CD8-positive, alpha-beta memory T cell (primary cell): ENCODE measurements at regions of chr17 and their contacts with region 1.

Region 1: DNA sequence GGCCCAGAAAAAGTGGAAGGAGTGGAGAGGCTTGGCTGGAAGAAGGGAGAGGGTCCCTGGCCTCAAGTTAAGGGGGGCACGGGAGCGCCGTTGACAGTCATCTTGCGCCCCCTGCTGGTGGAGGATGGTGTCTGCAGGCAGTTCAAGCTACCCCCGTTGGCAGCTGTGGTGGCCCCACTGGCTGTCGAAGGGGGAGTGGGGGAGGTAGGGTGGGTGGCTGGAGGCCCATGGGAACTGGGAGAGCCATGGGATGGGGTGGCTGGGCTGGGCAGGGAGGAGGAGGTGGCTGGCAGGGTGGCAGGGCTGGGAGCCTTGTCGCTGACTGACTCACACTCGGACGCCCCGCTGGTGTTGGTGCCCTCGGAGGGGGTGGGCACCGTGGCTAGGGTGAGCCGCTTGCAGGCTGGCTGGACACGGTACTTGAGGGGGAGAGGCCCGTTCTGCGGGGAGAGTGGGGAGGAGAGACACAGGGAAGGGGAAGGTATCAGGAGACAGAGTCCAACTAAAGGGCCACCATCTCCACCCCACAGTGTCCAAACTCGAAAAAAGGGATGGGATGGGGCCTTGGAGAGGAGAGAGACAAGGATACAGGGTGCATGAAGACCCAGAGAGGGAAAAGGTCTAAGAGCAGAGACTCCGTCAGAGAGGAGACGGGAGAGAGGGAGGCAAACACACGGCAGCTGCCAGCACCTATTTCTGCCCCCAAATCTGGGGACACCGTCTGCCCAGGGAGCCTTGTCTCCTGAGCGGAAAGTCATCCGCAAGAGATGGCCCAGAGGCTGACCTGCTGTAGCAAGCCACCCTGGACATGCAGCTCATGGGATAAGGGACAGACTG is 5.2 kb downstream of the CISD3 start:
- DNase-seq: peak; percentile 59 to 83 (median 72)
- H3K4me3 ChIP-seq: no peak overlapping the region
- H3K4me3 Mint-ChIP-seq: peak overlapping the region in 1 of 7 donors; percentile 22
- H3K27ac ChIP-seq: no peak overlapping the region
- H3K27ac Mint-ChIP-seq: peak overlapping the region in 2 of 8 donors; percentile 26 to 99
- H3K4me1 ChIP-seq: peaks cover 23% of the 10 kb centered on the region
- H3K4me1 Mint-ChIP-seq: peaks cover 38 to 51% (median 42%) of the 10 kb centered on the region in 3 donors
- H3K27me3 ChIP-seq: no peaks in the 10 kb centered on the region
- H3K27me3 Mint-ChIP-seq: no peaks in the 10 kb centered on the region

Region 2: DNA sequence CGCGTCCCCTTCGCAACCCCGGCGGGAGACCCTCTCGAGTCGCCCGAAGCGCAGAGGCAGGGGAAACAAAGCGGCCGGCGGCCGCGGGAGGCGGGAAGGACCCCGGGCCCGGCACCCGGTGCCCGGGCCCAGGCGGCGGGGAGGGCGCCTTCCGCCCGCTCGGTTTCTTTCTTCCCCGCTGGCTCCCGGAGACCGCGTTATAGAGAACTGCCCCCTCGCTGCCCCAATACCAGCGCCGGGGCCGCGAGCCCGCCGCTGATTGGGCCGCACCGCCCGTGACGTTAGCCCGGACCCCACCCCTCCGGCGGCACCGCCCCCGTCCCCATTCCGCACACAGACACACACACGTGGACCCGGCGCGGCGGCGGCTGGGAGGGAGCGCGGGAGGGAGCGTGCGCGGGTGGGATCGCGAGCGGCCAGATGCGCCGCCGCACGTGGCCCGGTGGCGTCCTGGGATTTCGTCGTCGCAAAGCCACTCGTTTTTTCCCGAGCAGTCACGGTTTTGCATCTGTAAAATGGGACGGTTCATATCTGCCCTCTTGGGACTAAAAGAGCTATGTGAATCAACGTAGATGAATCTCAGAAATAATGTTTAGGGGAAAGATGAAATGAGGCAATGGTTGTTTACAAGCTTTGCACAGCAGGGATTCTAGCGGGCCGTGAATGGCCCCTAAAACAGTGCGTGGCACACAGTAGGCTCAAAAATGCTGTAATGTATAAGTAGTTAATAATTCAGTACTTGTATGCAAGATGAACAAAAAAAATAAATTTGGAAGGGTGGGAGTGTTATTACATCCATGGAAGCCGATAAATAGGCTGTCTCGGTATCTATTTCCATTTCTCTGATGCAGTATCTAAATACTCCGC is 60.4 kb before region 1 on chr17 and contains the start of gene EPOP:
- CTCF ChIA-PET with region 1: interaction called, 140 read pairs
- POLR2A ChIA-PET with region 1: interaction called, 5 read pairs
- DNase-seq: peak; percentile 75 to 82 (median 81)
- H3K4me3 ChIP-seq: peak within 1 kb of the TSS; percentile 5
- H3K4me3 Mint-ChIP-seq: peak within 1 kb of the TSS; percentile 49 to 83 (median 67)
- H3K27ac ChIP-seq: no peak within 1 kb of the TSS
- H3K27ac Mint-ChIP-seq: peak within 1 kb of the TSS in 2 of 8 donors; percentile 19 to 39
- H3K4me1 ChIP-seq: peaks cover 7% of the 10 kb centered on the region
- H3K4me1 Mint-ChIP-seq: peaks cover 13 to 21% (median 16%) of the 10 kb centered on the region in 3 donors
- H3K27me3 ChIP-seq: peaks cover 14% of the 10 kb centered on the region
- H3K27me3 Mint-ChIP-seq: peaks cover 25 to 43% of the 10 kb centered on the region in 2 donors
- total RNA-seq, gene EPOP: 47.0 to 50.0 TPM

Region 3: GRCh38 chr17:38685491-38685890 is 49.9 kb before region 1 on chr17:
- CTCF ChIA-PET with region 1: interaction called, 140 read pairs
- POLR2A ChIA-PET with region 1: no interaction called
- DNase-seq: no peak
- H3K4me3 ChIP-seq: no peak overlapping the region
- H3K4me3 Mint-ChIP-seq: peak overlapping the region in 1 of 7 donors; percentile 34
- H3K27ac ChIP-seq: no peak overlapping the region
- H3K27ac Mint-ChIP-seq: peak overlapping the region in 2 of 8 donors; percentile 62 to 96
- H3K4me1 ChIP-seq: no peaks in the 10 kb centered on the region
- H3K4me1 Mint-ChIP-seq: no peaks in the 10 kb centered on the region
- H3K27me3 ChIP-seq: no peaks in the 10 kb centered on the region
- H3K27me3 Mint-ChIP-seq: peaks cover 7 to 17% of the 10 kb centered on the region in 2 donors

Region 4: DNA sequence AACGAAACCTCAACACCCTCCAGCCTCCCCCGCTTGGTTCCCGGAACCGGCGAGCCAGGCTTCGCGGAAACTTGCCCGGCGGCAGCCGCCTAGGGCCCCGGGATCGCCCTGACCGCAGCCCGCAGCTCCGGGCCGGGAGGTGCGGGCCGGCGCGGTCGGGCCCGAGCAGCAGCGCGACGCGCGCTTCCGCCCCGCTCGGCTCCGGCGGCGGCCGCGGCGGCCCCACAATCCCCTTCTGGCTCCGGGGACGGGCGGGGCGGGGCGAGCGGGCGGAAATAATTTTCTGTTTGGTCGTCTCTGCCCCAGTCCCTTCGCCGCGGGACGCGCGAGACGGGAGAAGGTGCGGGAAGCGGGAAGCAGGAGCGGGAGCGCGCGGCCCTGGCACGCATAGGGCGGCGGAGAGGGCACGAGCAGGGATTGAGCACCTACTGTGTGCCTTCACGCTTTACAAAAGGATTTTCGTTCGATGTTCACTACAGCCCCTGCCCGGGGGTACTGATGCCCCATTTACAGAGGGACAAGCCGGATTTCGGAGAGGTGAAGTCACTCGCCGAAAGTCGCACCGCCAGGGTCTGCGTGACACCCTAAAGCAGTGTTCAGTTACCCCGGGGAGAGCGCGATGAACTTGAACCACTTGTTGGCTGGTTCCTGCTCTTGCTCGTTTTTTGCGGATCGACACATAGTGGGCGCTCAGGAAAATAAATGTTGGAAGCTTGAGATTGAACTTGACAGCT is 33.0 kb before region 1 on chr17:
- CTCF ChIA-PET with region 1: interaction called, 17 read pairs
- POLR2A ChIA-PET with region 1: interaction called, 8 read pairs
- DNase-seq: peak; percentile 76 to 86 (median 77)
- H3K4me3 ChIP-seq: peak overlapping the region; percentile 93
- H3K4me3 Mint-ChIP-seq: peak overlapping the region; percentile 92 to 99 (median 94)
- H3K27ac ChIP-seq: peak overlapping the region; percentile 90
- H3K27ac Mint-ChIP-seq: peak overlapping the region; percentile 93 to 100 (median 98)
- H3K4me1 ChIP-seq: peaks cover 32% of the 10 kb centered on the region
- H3K4me1 Mint-ChIP-seq: peaks cover 30 to 44% (median 40%) of the 10 kb centered on the region in 3 donors
- H3K27me3 ChIP-seq: no peaks in the 10 kb centered on the region
- H3K27me3 Mint-ChIP-seq: no peaks in the 10 kb centered on the region

Region 5: GRCh38 chr17:38711792-38712571 is 23.4 kb before region 1 on chr17:
- CTCF ChIA-PET with region 1: interaction called, 13 read pairs
- POLR2A ChIA-PET with region 1: interaction called, 3 read pairs
- DNase-seq: no peak
- H3K4me3 ChIP-seq: no peak overlapping the region
- H3K4me3 Mint-ChIP-seq: no peak overlapping the region
- H3K27ac ChIP-seq: no peak overlapping the region
- H3K27ac Mint-ChIP-seq: peak overlapping the region in 4 of 8 donors; percentile 38 to 60 (median 50)
- H3K4me1 ChIP-seq: peaks cover 39% of the 10 kb centered on the region
- H3K4me1 Mint-ChIP-seq: peaks cover 36 to 52% (median 37%) of the 10 kb centered on the region in 3 donors
- H3K27me3 ChIP-seq: no peaks in the 10 kb centered on the region
- H3K27me3 Mint-ChIP-seq: no peaks in the 10 kb centered on the region

Region 6: DNA sequence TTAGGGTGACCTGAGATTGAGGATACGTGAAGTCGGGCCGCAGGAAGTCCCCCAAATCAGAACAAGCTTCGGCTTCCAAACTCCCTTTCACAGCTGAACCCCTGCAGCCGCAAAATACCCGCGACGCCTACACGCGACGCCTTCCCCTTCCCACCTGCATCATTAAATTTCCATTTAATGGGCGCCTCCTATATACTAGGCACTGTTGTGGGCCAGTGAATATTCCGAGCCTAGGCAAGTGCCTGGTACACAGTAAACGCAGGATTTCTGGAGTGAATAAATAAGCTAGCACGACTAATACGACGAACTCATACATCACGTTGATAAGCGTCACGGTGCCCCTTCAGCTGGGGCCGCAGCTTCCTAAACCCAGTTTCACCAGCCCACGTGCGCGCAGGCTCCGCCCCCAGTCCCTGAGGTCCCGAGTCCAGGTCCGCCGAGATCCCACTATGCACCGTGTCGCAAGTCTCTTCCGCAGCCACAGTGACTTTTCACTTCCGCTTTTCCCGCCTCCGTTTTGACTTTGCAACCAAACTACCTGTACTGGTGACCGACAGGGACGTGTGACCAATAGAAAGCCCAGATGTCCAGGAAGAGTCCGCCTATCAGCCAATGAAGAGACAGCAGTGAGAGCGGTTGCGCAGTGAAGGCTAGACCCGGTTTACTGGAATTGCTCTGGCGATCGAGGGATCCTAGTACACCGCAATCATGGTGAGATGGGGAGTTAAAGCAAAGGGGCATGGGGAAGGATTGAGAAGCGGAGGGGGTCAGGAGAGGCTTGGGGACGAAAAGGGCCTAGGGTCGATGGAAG is 16.9 kb after region 1 on chr17 and contains the start of gene PSMB3:
- CTCF ChIA-PET with region 1: interaction called, 23 read pairs
- POLR2A ChIA-PET with region 1: interaction called, 7 read pairs
- DNase-seq: peak; percentile 91 to 97 (median 96)
- H3K4me3 ChIP-seq: peak within 1 kb of the TSS; percentile 98
- H3K4me3 Mint-ChIP-seq: peak within 1 kb of the TSS; percentile 88 to 100 (median 98)
- H3K27ac ChIP-seq: peak within 1 kb of the TSS; percentile 91
- H3K27ac Mint-ChIP-seq: peak within 1 kb of the TSS; percentile 89 to 99 (median 97)
- H3K4me1 ChIP-seq: peaks cover 55% of the 10 kb centered on the region
- H3K4me1 Mint-ChIP-seq: peaks cover 46 to 72% (median 52%) of the 10 kb centered on the region in 3 donors
- H3K27me3 ChIP-seq: peaks cover 29% of the 10 kb centered on the region
- H3K27me3 Mint-ChIP-seq: peaks cover 24 to 29% of the 10 kb centered on the region in 2 donors
- total RNA-seq, gene PSMB3: 317 to 323 TPM

Region 7: DNA sequence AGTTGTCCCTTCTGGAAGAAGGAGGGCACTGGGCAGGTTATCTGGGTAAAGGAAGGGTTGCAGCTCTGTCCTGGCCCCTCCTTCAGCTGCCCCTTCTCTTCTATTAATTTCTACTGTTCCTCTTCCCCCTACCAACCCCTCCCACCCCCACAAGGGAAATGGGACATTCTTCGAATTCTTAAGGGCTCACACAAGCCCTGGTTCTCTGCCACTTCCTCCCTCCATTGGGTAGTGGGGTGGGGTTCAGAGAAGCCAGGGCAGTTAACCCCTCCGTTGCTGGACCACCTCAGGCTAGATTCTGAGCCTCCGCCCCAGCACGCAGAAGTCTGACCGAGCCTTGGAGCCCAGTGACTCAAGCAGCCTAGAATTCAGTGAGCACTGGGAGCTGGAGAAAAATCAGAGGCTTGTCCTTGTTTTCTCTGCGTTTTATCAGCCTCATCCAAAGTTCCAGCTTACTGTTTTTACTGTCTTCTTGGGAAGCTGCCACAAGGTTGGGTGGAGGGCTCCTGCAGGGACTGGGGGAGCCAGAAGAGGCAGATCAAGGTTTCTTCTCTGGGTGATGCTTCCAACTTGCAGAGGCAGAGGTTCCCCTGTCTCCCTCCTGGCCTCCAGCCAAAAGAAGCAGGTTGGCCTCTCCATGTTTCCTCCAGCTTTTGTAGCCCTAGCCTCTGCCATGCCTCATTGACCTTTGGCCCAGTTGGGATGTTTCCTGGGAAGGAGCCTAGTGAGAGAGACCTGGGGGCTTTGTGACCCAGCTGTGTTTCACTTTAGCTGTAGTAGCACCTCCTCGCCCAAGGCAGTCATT is 144.7 kb after region 1 on chr17:
- CTCF ChIA-PET with region 1: no interaction called
- POLR2A ChIA-PET with region 1: no interaction called
- DNase-seq: no peak
- H3K4me3 ChIP-seq: peak overlapping the region; percentile 51
- H3K4me3 Mint-ChIP-seq: peak overlapping the region; percentile 50 to 83 (median 55)
- H3K27ac ChIP-seq: no peak overlapping the region
- H3K27ac Mint-ChIP-seq: peak overlapping the region; percentile 40 to 94 (median 85)
- H3K4me1 ChIP-seq: peaks cover 95% of the 10 kb centered on the region
- H3K4me1 Mint-ChIP-seq: peaks cover 83 to 93% (median 91%) of the 10 kb centered on the region in 3 donors
- H3K27me3 ChIP-seq: no peaks in the 10 kb centered on the region
- H3K27me3 Mint-ChIP-seq: peaks cover 0 to 2% of the 10 kb centered on the region in 2 donors